ENCODE measurements at regions of chr3 and their contacts with region 1.

Region 1: DNA sequence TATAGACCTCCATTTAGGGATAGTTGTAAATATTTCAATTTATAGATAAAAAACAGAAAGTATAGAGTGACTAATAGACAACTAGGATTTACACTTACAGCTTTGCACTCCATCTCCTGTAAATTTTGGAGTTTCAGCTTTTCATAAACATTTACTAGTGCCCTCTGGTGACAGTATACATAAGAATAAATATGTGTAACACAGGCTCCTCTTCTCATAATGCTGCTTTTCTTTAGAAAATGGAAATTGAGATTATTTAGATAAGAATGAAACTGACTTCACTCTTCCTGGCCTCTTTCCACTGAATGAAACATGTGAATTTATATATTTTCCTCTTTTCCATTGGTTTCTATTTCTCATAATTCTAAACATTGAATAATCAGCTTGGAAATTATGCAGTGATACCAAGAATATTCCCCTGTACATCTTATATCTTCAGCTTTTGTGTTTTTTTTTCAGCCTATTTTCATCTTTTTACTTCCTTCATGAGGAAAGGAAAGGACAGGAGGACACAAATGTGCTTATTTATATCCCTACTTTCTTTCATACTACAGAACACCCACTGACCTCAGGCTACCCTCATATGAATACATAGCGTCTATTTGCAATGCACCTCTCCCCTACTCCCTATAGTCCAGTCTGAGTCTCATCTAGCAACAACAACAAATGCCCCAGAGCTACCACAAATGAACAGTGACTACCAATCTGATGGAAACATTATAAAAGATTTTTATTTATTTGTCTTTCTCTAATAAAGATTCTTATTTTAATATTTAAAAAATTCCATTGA is 103.1 kb upstream of the CCDC39 start:
- DNase-seq: no peak
- ATAC-seq: no peak
- H3K4me3 ChIP-seq: no peak overlapping the region
- H3K27ac ChIP-seq: no peak overlapping the region
- H3K4me1 ChIP-seq: no peaks in the 10 kb centered on the region
- H3K27me3 ChIP-seq: no peaks in the 10 kb centered on the region
- CTCF ChIP-seq: no peak; a peak in 1 of 6 replicates
- POLR2A ChIP-seq: no peak
- RAD21 ChIP-seq: no peak

Region 2: GRCh38 chr3:180690061-180690460 is 92.3 kb before region 1 on chr3:
- CTCF ChIA-PET with region 1: interaction called, 14 read pairs
- POLR2A ChIA-PET with region 1: no interaction called
- RAD21 ChIA-PET with region 1: no interaction called
- intact Hi-C with region 1: no loop called
- DNase-seq: no peak
- ATAC-seq: no peak
- H3K4me3 ChIP-seq: no peak overlapping the region
- H3K27ac ChIP-seq: no peak overlapping the region
- H3K4me1 ChIP-seq: no peaks in the 10 kb centered on the region
- H3K27me3 ChIP-seq: peaks cover 43% of the 10 kb centered on the region
- CTCF ChIP-seq: 0 out of 6 replicates have a peak, but pooled peaks of 2 of the 3 experiments have one; percentile 5 to 24
- POLR2A ChIP-seq: no peak
- RAD21 ChIP-seq: peak; percentile 44

Measured in HCT116 (cell line).